ENCODE measurements at regions of chr5 and their contacts with region 1.

Region 1: GRCh38 chr5:81965524-81965923 is 6.3 kb upstream of the ATG10 start:
- DNase-seq: no peak
- ATAC-seq: no peak
- H3K4me3 ChIP-seq: no peak overlapping the region
- H3K27ac ChIP-seq: no peak overlapping the region
- H3K4me1 ChIP-seq: no peaks in the 10 kb centered on the region
- H3K27me3 ChIP-seq: no peaks in the 10 kb centered on the region
- CTCF ChIP-seq: no peak
- POLR2A ChIP-seq: no peak

Region 2: DNA sequence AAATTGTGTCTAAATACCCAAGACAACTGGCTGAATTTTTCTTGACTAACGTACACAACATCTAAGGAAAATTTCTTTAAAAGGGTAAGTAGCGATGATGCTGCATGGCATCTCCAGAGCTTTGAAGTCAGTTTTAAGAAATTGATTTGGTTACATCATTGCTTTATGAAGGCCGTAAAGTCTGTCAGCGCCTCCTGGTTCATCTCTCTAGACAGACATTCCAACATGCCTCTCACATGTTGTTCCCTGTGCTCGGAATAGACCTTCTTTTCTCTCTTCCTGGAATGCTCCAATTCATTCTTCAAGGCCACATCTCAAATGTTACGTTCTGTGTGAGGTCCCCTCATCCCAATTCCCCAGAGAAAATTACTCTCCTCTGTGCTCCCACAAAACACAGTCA is 105.9 kb before region 1 on chr5:
- in situ Hi-C with region 1: loop called in 1 of 4 experiments (anchors 10 kb)
- intact Hi-C with region 1: no loop called
- DNase-seq: no peak
- ATAC-seq: no peak
- H3K4me3 ChIP-seq: no peak overlapping the region
- H3K27ac ChIP-seq: no peak overlapping the region
- H3K4me1 ChIP-seq: peaks cover 21 to 26% of the 10 kb centered on the region in 2 donors
- H3K27me3 ChIP-seq: no peaks in the 10 kb centered on the region
- CTCF ChIP-seq: no peak
- POLR2A ChIP-seq: no peak

Measured in gastrocnemius medialis (tissue), 4 donors.